Activated T-helper 1 cell treated with anti-CD3 and anti-CD28 coated beads, Interleukin-12 subunit alpha, Interleukin-12 subunit beta, Interleukin-2, Interleukin-4 antibody, amounts not matched to agents 30 ng/mL and 10 ng/mL and 1 ng/mL, durations not matched to agents 14 hours and 24 hours and 36 hours (primary cell): ENCODE measurements at regions of chr10 and their contacts with region 1.

Region 1: GRCh38 chr10:72162978-72163377 is 52.8 kb upstream of the ANAPC16 start:
- DNase-seq: no peak
- H3K4me3 Mint-ChIP-seq: peak overlapping the region; percentile 57
- H3K27ac Mint-ChIP-seq: peak overlapping the region; percentile 80
- H3K4me1 Mint-ChIP-seq: peaks cover 27% of the 10 kb centered on the region
- H3K27me3 Mint-ChIP-seq: no peaks in the 10 kb centered on the region

Region 2: GRCh38 chr10:71933651-71934050 is 229.3 kb before region 1 on chr10:
- intact Hi-C with region 1: loop called (anchors 2 kb)
- DNase-seq: peak; percentile 37
- H3K4me3 Mint-ChIP-seq: peak overlapping the region; percentile 32
- H3K27ac Mint-ChIP-seq: peak overlapping the region; percentile 66
- H3K4me1 Mint-ChIP-seq: peaks cover 17% of the 10 kb centered on the region
- H3K27me3 Mint-ChIP-seq: peaks cover 13% of the 10 kb centered on the region

Region 3: GRCh38 chr10:72097448-72098300 is 65.3 kb before region 1 on chr10:
- intact Hi-C with region 1: loop called (anchors 2 kb)
- DNase-seq: no peak
- H3K4me3 Mint-ChIP-seq: no peak overlapping the region
- H3K27ac Mint-ChIP-seq: peak overlapping the region; percentile 36
- H3K4me1 Mint-ChIP-seq: peaks cover 61% of the 10 kb centered on the region
- H3K27me3 Mint-ChIP-seq: no peaks in the 10 kb centered on the region

Region 4: GRCh38 chr10:72146071-72146470 is 16.9 kb before region 1 on chr10:
- intact Hi-C with region 1: loop called (anchors 1 kb)
- DNase-seq: no peak
- H3K4me3 Mint-ChIP-seq: no peak overlapping the region
- H3K27ac Mint-ChIP-seq: no peak overlapping the region
- H3K4me1 Mint-ChIP-seq: peaks cover 15% of the 10 kb centered on the region
- H3K27me3 Mint-ChIP-seq: no peaks in the 10 kb centered on the region

Region 5: DNA sequence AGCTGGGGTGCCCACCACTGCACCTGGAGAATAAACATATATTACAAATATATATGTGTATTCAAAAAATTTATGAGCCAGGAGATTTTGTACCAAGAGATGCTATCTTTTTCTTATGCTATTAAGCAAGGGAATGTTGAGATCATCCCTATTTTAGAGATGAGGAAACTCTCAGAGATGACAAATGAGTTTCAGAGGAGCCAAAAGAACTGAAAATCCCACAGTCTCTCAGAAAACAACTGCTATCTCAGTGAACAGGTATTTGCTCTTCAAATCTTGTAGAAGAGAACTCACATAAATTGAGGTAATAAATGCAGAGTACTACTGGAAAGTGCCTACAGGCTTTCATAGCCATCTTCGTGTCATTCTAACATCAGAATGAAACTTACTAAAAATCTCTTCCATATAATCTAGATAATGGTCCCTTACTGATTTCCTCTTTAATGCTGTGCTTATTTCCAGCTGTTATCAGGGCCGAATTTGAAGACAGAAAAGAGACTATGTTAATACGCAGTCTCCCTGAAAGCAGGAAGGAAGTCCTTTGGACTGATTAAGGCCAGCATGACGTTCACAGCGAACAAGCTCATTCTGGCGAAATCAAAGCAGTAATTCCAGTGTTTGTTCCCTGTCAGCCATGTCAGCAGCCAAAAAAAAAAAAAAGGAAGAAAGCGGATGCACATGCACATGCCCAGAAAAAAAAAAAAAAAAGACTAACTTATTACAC is 23.4 kb after region 1 on chr10:
- intact Hi-C with region 1: no loop called
- DNase-seq: no peak
- H3K4me3 Mint-ChIP-seq: no peak overlapping the region
- H3K27ac Mint-ChIP-seq: no peak overlapping the region
- H3K4me1 Mint-ChIP-seq: peaks cover 8% of the 10 kb centered on the region
- H3K27me3 Mint-ChIP-seq: no peaks in the 10 kb centered on the region